Mammary epithelial cell (primary cell): ENCODE measurements at regions of chr19 and their contacts with region 1.

Region 1: DNA sequence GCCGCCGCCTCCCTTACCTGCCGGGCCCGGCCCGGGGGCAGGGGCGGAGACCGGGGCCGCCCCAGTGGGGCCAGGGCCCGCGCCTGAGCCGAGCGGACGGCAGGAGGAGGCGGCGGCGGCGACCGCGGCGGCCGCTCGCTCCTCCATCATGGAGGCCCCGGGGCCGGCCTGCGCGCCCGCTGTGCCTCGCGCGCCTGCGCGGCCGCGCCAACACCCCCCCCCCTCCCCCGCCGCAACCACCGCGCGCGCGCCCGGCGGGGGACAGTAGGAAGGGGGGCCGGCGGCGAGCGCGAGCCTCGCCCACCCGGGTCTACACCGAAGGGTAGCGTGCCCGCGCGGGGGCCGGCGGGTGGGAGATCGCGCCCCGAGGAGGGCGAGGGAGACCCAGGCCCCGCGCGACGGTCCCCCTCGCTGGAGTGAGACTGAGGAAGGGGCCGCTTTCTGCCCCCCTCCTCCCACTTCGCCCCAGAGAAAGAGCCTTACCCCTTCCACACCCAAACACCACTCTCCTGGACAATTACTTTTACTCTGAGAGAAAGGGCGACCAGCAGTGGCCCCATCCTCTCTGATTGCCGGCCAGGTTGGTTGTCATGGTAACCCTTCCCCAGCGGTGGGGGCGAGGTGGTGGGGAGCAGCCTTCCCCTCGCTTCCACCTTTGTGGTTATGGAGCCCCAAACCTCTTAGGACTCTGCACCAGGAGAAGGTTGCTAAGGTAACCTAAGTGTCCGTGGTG is at the start of gene STRN4:
- DNase-seq: peak; percentile 29
- H3K4me3 ChIP-seq: peak within 1 kb of the TSS; percentile 72 to 85 (median 77)
- H3K27ac ChIP-seq: peak within 1 kb of the TSS; percentile 64
- H3K4me1 ChIP-seq: peaks cover 5% of the 10 kb centered on the region
- H3K27me3 ChIP-seq: no peaks in the 10 kb centered on the region
- CTCF ChIP-seq: no peak
- total RNA-seq, gene STRN4: 59.2 to 92.4 TPM

Region 2: GRCh38 chr19:46704379-46705076 is 41.9 kb before region 1 on chr19:
- CTCF ChIA-PET with region 1: no interaction called
- dilution Hi-C with region 1: no loop called
- in situ Hi-C with region 1: no loop called
- intact Hi-C with region 1: loop called (anchors 1 kb)
- DNase-seq: peak; percentile 35
- H3K4me3 ChIP-seq: no peak overlapping the region
- H3K27ac ChIP-seq: no peak overlapping the region
- H3K4me1 ChIP-seq: no peaks in the 10 kb centered on the region
- H3K27me3 ChIP-seq: no peaks in the 10 kb centered on the region
- CTCF ChIP-seq: peak; percentile 78 to 84

Region 3: DNA sequence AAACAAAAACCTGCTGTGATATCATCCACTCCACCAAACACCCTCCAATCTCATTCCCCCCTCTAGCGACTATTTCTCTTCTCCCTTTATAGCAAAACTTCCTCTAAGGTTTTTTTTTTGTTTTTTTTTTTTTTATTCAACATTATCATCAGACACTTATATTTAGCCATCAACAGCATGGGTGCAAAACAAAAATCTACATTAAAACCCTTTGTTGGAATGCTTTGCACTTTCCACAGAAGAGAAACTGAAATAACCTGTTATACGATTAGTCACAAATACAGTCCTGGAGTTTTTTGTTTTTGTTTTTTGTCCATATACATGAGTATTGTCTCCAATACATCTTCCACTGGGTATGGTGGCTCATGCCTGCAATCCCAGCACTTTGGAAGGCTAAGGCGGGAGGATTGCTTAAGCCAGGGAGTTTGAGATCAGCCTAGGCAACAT is 79.1 kb after region 1 on chr19:
- CTCF ChIA-PET with region 1: no interaction called
- dilution Hi-C with region 1: loop called (anchors 5 kb)
- in situ Hi-C with region 1: no loop called
- intact Hi-C with region 1: no loop called
- DNase-seq: peak; percentile 37
- H3K4me3 ChIP-seq: no peak overlapping the region
- H3K27ac ChIP-seq: no peak overlapping the region
- H3K4me1 ChIP-seq: peaks cover 11% of the 10 kb centered on the region
- H3K27me3 ChIP-seq: no peaks in the 10 kb centered on the region
- CTCF ChIP-seq: no peak

Region 4: GRCh38 chr19:46990991-46991676 is 244.7 kb after region 1 on chr19:
- CTCF ChIA-PET with region 1: no interaction called
- dilution Hi-C with region 1: no loop called
- in situ Hi-C with region 1: loop called in 1 of 2 experiments (anchors 25 kb)
- intact Hi-C with region 1: loop called (anchors 2 kb)
- DNase-seq: peak; percentile 60
- H3K4me3 ChIP-seq: no peak overlapping the region
- H3K27ac ChIP-seq: no peak overlapping the region
- H3K4me1 ChIP-seq: no peaks in the 10 kb centered on the region
- H3K27me3 ChIP-seq: no peaks in the 10 kb centered on the region
- CTCF ChIP-seq: peak; percentile 77 to 89

Region 5: GRCh38 chr19:47112997-47113849 is 366.8 kb after region 1 on chr19 and contains the start of gene ZC3H4:
- CTCF ChIA-PET with region 1: no interaction called
- dilution Hi-C with region 1: no loop called
- in situ Hi-C with region 1: no loop called
- intact Hi-C with region 1: loop called (anchors 5 kb)
- DNase-seq: peak; percentile 99
- H3K4me3 ChIP-seq: peak within 1 kb of the TSS; percentile 77 to 96 (median 81)
- H3K27ac ChIP-seq: peak within 1 kb of the TSS; percentile 99
- H3K4me1 ChIP-seq: peaks cover 20% of the 10 kb centered on the region
- H3K27me3 ChIP-seq: no peaks in the 10 kb centered on the region
- CTCF ChIP-seq: no peak
- total RNA-seq, gene ZC3H4: 13.8 to 57.8 TPM